Calu3 (cell line): ENCODE measurements at regions of chr9 and their contacts with region 1.

Region 1: GRCh38 chr9:87599901-87600610 is 102.4 kb downstream of the DAPK1 start:
- DNase-seq: peak; percentile 37
- H3K4me3 Mint-ChIP-seq: peak overlapping the region; percentile 61
- H3K27ac Mint-ChIP-seq: peak overlapping the region; percentile 88
- H3K4me1 Mint-ChIP-seq: peaks cover 62% of the 10 kb centered on the region
- H3K27me3 Mint-ChIP-seq: no peaks in the 10 kb centered on the region
- CTCF ChIP-seq: no peak

Region 2: DNA sequence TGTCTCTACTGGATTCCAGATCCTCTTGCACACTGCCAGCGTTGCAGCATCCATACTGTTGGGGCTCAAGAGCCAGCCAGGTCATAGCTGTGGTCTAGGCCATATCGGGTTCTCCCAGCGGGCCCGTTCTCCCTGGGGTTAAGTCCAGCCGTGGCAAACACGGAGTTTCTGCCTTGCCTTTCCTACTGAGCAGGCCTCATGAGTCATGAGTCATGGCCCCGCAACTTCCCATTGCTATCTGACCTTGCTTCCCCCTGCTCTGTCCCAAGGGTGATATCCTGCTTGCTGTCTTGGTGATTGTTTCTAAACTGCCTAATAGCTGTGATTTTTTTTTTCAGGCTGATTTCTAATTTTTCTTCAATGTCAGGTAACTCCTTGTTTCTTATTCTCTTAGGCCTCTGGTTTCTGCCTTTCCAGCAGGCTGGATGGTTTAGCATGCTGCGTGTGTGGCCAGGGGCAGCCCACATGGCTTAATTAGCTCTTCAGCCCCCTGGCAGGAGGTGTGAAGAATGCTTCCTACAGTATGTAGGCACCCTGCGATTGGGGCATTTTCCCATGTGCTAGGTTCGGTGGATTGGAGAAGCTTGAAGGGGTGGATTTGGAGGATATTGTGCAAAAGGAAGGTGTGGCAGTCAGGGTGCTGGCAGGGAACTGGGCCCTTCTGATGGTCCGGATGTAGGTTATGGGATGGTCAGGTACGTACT is 83.7 kb before region 1 on chr9:
- CTCF ChIA-PET with region 1: no interaction called
- intact Hi-C with region 1: no loop called
- DNase-seq: peak; percentile 37
- H3K4me3 Mint-ChIP-seq: peak overlapping the region; percentile 33
- H3K27ac Mint-ChIP-seq: peak overlapping the region; percentile 70
- H3K4me1 Mint-ChIP-seq: peaks cover 71% of the 10 kb centered on the region
- H3K27me3 Mint-ChIP-seq: no peaks in the 10 kb centered on the region
- CTCF ChIP-seq: no peak

Region 3: DNA sequence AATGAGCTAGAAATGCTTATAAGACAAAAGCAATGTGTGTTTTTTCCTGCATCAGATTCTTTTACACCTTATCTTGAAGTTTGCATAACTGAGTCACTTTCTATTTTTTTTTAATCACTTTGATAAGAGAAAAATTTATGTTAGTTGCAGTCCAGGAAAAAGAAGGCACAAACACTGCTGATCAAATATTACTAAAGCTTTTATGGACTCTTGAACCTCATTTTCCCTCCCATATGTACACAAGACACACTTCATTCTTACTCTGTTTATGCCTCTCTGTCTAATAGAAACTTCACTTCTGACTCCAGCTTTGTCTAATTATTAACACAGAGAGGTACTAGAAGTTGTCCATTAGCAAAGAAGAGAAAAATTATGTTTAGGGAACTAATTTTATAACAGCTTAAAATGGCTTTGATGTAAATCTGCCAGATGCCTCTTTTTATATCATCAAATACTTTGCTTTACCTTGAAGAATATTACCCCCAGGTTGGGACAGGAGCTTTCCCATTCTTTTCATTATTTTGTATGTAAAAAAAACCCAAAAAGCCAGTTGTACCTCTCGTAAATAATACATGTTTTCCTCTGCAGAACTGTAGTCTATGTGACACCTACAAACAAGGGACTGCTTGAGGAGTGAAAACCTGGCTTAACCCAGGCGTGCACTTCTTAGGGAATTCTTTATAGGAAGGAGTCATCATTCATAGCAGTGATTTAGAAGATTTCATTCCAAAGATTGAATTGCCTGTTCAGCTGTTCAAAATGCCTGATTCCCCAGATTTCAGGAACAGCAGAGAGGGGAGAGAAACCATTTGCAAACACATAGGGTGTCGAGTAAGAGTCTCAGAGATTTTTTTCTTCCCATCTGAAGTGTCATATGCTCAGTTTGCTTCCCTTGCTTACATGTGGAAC is 29.8 kb before region 1 on chr9:
- CTCF ChIA-PET with region 1: interaction called, 7 read pairs
- intact Hi-C with region 1: loop called (anchors 2 kb)
- DNase-seq: no peak
- H3K4me3 Mint-ChIP-seq: peak overlapping the region; percentile 55
- H3K27ac Mint-ChIP-seq: peak overlapping the region; percentile 75
- H3K4me1 Mint-ChIP-seq: peaks cover 69% of the 10 kb centered on the region
- H3K27me3 Mint-ChIP-seq: no peaks in the 10 kb centered on the region
- CTCF ChIP-seq: no peak

Region 4: GRCh38 chr9:87662808-87663528 is 62.9 kb after region 1 on chr9:
- CTCF ChIA-PET with region 1: no interaction called
- intact Hi-C with region 1: loop called (anchors 5 kb)
- DNase-seq: peak; percentile 87
- H3K4me3 Mint-ChIP-seq: no peak overlapping the region
- H3K27ac Mint-ChIP-seq: peak overlapping the region; percentile 47
- H3K4me1 Mint-ChIP-seq: peaks cover 22% of the 10 kb centered on the region
- H3K27me3 Mint-ChIP-seq: no peaks in the 10 kb centered on the region
- CTCF ChIP-seq: peak; percentile 64